B cell (primary cell): ENCODE measurements at regions of chr20 and their contacts with region 1.

Region 1: GRCh38 chr20:2651772-2652723 is at the start of gene NOP56:
- DNase-seq: peak; percentile 98
- ATAC-seq: peak; percentile 89
- H3K4me3 ChIP-seq: peak within 1 kb of the TSS; percentile 81 to 86 (median 85)
- H3K4me3 Mint-ChIP-seq: peak within 1 kb of the TSS; percentile 91
- H3K27ac ChIP-seq: peak within 1 kb of the TSS; percentile 77 to 93
- H3K27ac Mint-ChIP-seq: peak within 1 kb of the TSS; percentile 91
- H3K4me1 ChIP-seq: peaks cover 19 to 20% of the 10 kb centered on the region in 2 donors
- H3K4me1 Mint-ChIP-seq: peaks cover 25% of the 10 kb centered on the region
- H3K27me3 ChIP-seq: no peaks in the 10 kb centered on the region
- H3K27me3 Mint-ChIP-seq: no peaks in the 10 kb centered on the region
- CTCF ChIP-seq: no peak
- total RNA-seq, gene NOP56: 229 and 247 TPM in 2 replicates

Region 2: GRCh38 chr20:2470423-2471193 is 181.4 kb before region 1 on chr20 and contains the start of gene SNRPB:
- CTCF ChIA-PET with region 1: no interaction called
- POLR2A ChIA-PET with region 1: interaction called, 5 read pairs
- intact Hi-C with region 1: loop called (anchors 1 kb)
- DNase-seq: peak; percentile 98
- ATAC-seq: peak; percentile 94
- H3K4me3 ChIP-seq: peak within 1 kb of the TSS; percentile 74 to 98 (median 91)
- H3K4me3 Mint-ChIP-seq: peak within 1 kb of the TSS; percentile 99
- H3K27ac ChIP-seq: peak within 1 kb of the TSS; percentile 96 to 98
- H3K27ac Mint-ChIP-seq: peak within 1 kb of the TSS; percentile 100
- H3K4me1 ChIP-seq: peaks cover 19 to 20% of the 10 kb centered on the region in 2 donors
- H3K4me1 Mint-ChIP-seq: peaks cover 37% of the 10 kb centered on the region
- H3K27me3 ChIP-seq: no peaks in the 10 kb centered on the region
- H3K27me3 Mint-ChIP-seq: no peaks in the 10 kb centered on the region
- CTCF ChIP-seq: no peak
- total RNA-seq, gene SNRPB: 117 and 123 TPM in 2 replicates

Region 3: GRCh38 chr20:2523919-2524708 is 127.9 kb before region 1 on chr20:
- CTCF ChIA-PET with region 1: interaction called, 8 read pairs
- POLR2A ChIA-PET with region 1: interaction called, 4 read pairs
- intact Hi-C with region 1: loop called (anchors 2 kb)
- DNase-seq: peak; percentile 91
- ATAC-seq: peak; percentile 87
- H3K4me3 ChIP-seq: peak overlapping the region; percentile 52 to 94 (median 84)
- H3K4me3 Mint-ChIP-seq: peak overlapping the region; percentile 90
- H3K27ac ChIP-seq: peak overlapping the region; percentile 49 to 72
- H3K27ac Mint-ChIP-seq: peak overlapping the region; percentile 77
- H3K4me1 ChIP-seq: peaks cover 9 to 19% of the 10 kb centered on the region in 2 donors
- H3K4me1 Mint-ChIP-seq: peaks cover 12% of the 10 kb centered on the region
- H3K27me3 ChIP-seq: peaks cover 0 to 14% (median 3%) of the 10 kb centered on the region in 4 experiments
- H3K27me3 Mint-ChIP-seq: peaks cover 3% of the 10 kb centered on the region
- CTCF ChIP-seq: peak; percentile 97

Region 4: DNA sequence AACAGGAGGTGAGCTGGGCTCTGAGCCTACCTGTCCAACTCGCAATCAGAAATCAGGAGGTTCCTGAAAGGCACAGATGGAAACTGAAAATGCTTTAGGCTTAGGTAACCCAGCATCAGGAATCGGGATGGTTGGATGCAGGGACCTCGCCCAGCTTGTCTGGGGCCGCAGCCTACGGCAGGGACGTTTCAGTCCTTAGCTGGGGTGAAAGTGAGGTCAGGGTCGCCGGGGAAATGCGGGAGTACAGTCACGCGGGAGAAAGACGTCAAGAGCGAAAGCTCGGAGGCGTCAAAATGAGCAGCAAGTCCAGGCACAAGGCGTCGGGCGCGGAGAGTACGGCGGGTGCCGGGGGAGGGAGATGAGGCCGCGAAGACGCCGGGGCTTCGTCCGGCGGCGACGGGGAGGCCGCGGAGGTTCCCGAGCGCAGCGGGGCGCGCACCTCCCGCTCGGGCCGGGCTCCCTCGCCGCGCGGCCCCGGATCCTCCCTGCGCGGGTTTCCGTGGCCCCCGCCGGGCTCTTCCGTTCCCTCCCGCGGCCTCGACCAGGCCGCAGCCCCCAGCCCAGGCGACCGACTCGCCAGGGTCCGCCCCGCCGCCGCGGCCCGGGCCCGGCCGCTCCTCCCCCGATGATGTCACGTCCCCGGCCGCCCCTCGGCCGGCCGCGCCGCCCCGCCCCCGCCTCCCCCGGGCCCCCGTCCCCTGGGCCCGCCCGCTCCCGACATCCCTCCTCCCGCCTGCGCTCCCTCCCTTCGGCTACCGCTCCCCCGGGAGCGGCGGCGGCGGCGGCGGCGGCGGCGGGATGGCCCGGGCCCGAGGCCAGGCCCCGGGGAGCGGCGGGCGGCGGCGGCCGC is 40.2 kb after region 1 on chr20 and contains the start of gene EBF4:
- CTCF ChIA-PET with region 1: interaction called, 4 read pairs
- POLR2A ChIA-PET with region 1: no interaction called
- intact Hi-C with region 1: loop called (anchors 2 kb)
- DNase-seq: peak; percentile 56
- ATAC-seq: peak; percentile 56
- H3K4me3 ChIP-seq: peak within 1 kb of the TSS in 4 of 5 experiments; percentile 34 to 49 (median 40)
- H3K4me3 Mint-ChIP-seq: peak within 1 kb of the TSS; percentile 91
- H3K27ac ChIP-seq: no peak within 1 kb of the TSS
- H3K27ac Mint-ChIP-seq: peak within 1 kb of the TSS; percentile 74
- H3K4me1 ChIP-seq: peaks cover 14 to 19% of the 10 kb centered on the region in 2 donors
- H3K4me1 Mint-ChIP-seq: peaks cover 22% of the 10 kb centered on the region
- H3K27me3 ChIP-seq: peaks cover 0 to 65% (median 32%) of the 10 kb centered on the region in 4 experiments
- H3K27me3 Mint-ChIP-seq: peaks cover 69% of the 10 kb centered on the region
- CTCF ChIP-seq: no peak
- total RNA-seq, gene EBF4: 4.7 and 5.0 TPM in 2 replicates

Region 5: GRCh38 chr20:3000852-3001523 is 348.9 kb after region 1 on chr20:
- CTCF ChIA-PET with region 1: no interaction called
- POLR2A ChIA-PET with region 1: no interaction called
- intact Hi-C with region 1: loop called (anchors 1 kb)
- DNase-seq: peak; percentile 50
- ATAC-seq: peak; percentile 62
- H3K4me3 ChIP-seq: no peak overlapping the region
- H3K4me3 Mint-ChIP-seq: no peak overlapping the region
- H3K27ac ChIP-seq: no peak overlapping the region
- H3K27ac Mint-ChIP-seq: no peak overlapping the region
- H3K4me1 ChIP-seq: no peaks in the 10 kb centered on the region
- H3K4me1 Mint-ChIP-seq: no peaks in the 10 kb centered on the region
- H3K27me3 ChIP-seq: no peaks in the 10 kb centered on the region
- H3K27me3 Mint-ChIP-seq: no peaks in the 10 kb centered on the region
- CTCF ChIP-seq: peak; percentile 75